Activated CD4-positive, alpha-beta memory T cell treated with anti-CD3 and anti-CD28 coated beads, Interleukin-2, amount 10 ng/mL, durations not matched to agents 7 days and 5 days (primary cell): ENCODE measurements at regions of chr13 and their contacts with region 1.

Region 1: DNA sequence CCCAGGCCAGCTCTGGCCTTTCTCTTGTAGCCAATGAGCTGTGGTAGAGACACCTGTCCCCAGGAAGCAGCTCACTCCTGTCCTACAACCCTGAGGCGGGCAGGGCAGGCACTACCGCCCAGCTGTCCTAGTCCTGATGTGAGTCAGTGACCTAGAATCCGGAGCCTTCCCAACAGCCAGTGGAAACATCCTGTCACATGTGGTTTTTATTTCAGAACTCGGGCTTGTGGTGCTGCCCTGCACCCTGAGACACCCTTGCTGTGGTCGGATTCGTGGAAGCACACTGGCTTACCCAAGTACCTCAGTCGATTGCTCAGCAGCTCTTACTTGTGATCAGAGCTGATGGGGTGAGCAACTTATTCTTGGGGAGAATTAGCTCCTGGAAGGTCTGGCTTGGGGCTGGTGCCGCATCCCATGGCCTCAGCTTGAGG is 83.6 kb upstream of the ARHGEF7 start:
- DNase-seq: peak; percentile 82
- H3K4me3 Mint-ChIP-seq: peak overlapping the region; percentile 4
- H3K27ac Mint-ChIP-seq: peak overlapping the region; percentile 91
- H3K4me1 Mint-ChIP-seq: peaks cover 40% of the 10 kb centered on the region
- H3K27me3 Mint-ChIP-seq: peaks cover 38% of the 10 kb centered on the region

Region 2: DNA sequence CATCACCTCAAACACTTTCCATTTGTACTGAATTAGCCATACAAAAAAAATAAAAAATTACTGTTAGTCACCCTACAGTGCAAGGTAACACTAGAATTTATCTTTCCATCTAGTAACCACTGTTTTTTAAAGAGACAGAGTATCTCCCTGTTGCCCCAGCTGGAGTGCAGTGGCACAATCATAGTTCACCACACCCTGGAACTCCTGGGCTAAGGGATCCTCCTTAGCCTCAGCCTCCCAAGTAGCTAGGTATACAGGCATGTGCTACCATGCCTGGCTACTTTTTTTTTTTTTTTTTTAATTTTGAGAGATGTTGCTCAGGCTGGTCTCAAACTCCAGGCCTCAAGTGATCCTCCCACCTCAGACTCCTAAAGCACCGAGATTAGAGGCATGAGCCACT is 134.5 kb before region 1 on chr13:
- CTCF ChIA-PET with region 1: no interaction called
- POLR2A ChIA-PET with region 1: no interaction called
- DNase-seq: no peak
- H3K4me3 Mint-ChIP-seq: no peak overlapping the region
- H3K27ac Mint-ChIP-seq: no peak overlapping the region
- H3K4me1 Mint-ChIP-seq: peaks cover 4% of the 10 kb centered on the region
- H3K27me3 Mint-ChIP-seq: no peaks in the 10 kb centered on the region

Region 3: GRCh38 chr13:111011899-111012298 is 19.6 kb before region 1 on chr13:
- CTCF ChIA-PET with region 1: interaction called, 4 read pairs
- POLR2A ChIA-PET with region 1: interaction called, 38 read pairs
- DNase-seq: peak; percentile 68
- H3K4me3 Mint-ChIP-seq: peak overlapping the region; percentile 2
- H3K27ac Mint-ChIP-seq: peak overlapping the region; percentile 88
- H3K4me1 Mint-ChIP-seq: peaks cover 45% of the 10 kb centered on the region
- H3K27me3 Mint-ChIP-seq: peaks cover 32% of the 10 kb centered on the region